ENCODE measurements at regions of chr11 and their contacts with region 1.

Region 1: DNA sequence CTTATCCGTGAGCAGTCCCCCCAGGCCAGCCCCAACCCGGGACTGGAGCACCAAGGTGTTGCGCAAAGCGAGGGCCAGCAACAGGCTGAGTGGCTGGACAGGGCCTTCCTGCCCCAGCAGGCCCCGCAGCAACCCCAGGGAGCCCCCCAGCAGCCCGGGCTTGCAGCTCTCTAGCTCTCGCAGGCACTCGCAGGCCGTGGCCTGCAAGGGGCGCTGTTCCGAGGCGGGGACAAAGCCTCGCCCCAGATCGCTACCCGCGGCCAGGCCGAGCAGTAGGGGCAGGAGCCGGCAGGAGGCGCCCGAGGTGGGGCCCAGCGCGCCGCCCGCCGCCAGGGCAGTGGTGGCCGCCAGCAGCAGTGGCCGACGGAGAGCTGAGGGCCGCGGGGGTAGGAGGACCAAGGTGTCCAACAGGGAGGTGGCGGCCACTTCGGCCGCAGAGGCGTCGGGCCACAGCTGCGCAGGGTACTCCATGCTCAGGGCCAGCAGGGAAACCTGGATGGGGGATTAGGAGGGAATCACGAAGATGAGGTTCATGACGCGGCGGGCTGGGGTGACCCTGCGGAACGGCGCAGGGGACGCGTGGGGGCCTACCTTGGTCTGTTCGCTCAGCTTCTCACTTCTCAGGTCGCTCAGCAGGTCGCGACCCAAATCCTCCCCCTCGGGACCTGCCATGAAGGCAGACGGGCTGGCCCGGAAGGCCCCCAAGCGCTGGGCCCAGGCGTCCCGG is 762 bp downstream of the AP5B1 start:
- DNase-seq: peak; percentile 95
- ATAC-seq: peak; percentile 77
- H3K4me3 Mint-ChIP-seq: peak overlapping the region; percentile 89
- H3K27ac Mint-ChIP-seq: peak overlapping the region; percentile 91
- H3K4me1 Mint-ChIP-seq: peaks cover 15% of the 10 kb centered on the region
- H3K27me3 Mint-ChIP-seq: peaks cover under 1% of the 10 kb centered on the region

Region 2: GRCh38 chr11:65680192-65680743 is 99.7 kb before region 1 on chr11:
- POLR2A ChIA-PET with region 1: no interaction called
- DNase-seq: no peak
- ATAC-seq: no peak
- H3K4me3 Mint-ChIP-seq: no peak overlapping the region
- H3K27ac Mint-ChIP-seq: no peak overlapping the region
- H3K4me1 Mint-ChIP-seq: peaks cover 4% of the 10 kb centered on the region
- H3K27me3 Mint-ChIP-seq: peaks cover 10% of the 10 kb centered on the region

Region 3: GRCh38 chr11:65743928-65744698 is 35.9 kb before region 1 on chr11:
- POLR2A ChIA-PET with region 1: no interaction called
- DNase-seq: no peak
- ATAC-seq: no peak
- H3K4me3 Mint-ChIP-seq: no peak overlapping the region
- H3K27ac Mint-ChIP-seq: no peak overlapping the region
- H3K4me1 Mint-ChIP-seq: no peaks in the 10 kb centered on the region
- H3K27me3 Mint-ChIP-seq: peaks cover 26% of the 10 kb centered on the region

Region 4: GRCh38 chr11:65791691-65792213 is 11.7 kb after region 1 on chr11:
- POLR2A ChIA-PET with region 1: interaction called, 15 read pairs
- DNase-seq: peak; percentile 61
- ATAC-seq: peak; percentile 95
- H3K4me3 Mint-ChIP-seq: peak overlapping the region; percentile 30
- H3K27ac Mint-ChIP-seq: peak overlapping the region; percentile 78
- H3K4me1 Mint-ChIP-seq: peaks cover 24% of the 10 kb centered on the region
- H3K27me3 Mint-ChIP-seq: peaks cover 28% of the 10 kb centered on the region

Region 5: GRCh38 chr11:65817835-65818742 is 38.1 kb after region 1 on chr11:
- POLR2A ChIA-PET with region 1: interaction called, 19 read pairs
- DNase-seq: peak; percentile 99
- ATAC-seq: peak; percentile 90
- H3K4me3 Mint-ChIP-seq: peak overlapping the region; percentile 89
- H3K27ac Mint-ChIP-seq: peak overlapping the region; percentile 83
- H3K4me1 Mint-ChIP-seq: peaks cover 12% of the 10 kb centered on the region
- H3K27me3 Mint-ChIP-seq: peaks cover 3% of the 10 kb centered on the region

Measured in activated naive CD8-positive, alpha-beta T cell treated with anti-CD3 and anti-CD28 coated beads, Interleukin-2, amount 10 ng/mL, durations not matched to agents 7 days and 5 days (primary cell).